MCF 10A (cell line): ENCODE measurements at regions of chr9 and their contacts with region 1.

Region 1: DNA sequence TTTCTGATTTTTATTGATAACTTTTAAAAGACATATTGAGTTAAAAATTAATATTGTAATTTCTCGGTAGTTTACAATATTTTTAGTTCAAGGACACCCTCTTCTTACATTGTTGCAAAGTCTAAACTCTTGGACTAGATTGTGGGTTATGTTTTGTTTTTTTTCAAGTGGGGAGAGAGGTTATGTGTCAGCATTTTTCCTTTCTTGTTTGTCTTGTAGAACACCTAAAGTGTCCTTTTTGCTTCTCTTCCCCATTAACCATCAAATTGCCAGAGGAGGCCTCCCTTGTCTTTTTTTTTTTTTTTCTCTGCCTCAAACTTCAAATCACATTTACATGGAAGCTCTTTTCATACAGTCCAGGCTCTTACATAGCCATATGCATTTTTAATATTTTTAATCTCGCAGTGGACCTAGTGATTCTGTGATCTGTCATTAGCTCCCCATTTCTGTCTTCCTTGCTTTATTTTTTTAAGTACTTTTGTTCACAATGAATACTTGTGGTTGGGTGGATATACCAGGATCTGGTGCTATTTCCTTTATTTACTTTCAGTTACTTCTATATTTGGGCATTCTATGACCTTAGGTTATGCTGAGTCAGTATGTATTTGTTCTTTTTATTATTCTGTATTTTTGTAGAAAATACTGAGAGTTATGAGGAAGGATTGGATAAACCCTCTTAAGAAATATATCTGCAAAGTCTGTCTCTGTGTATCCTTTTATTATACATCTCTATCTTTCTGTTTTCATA is 2280.6 kb upstream of the ACO1 start:
- DNase-seq: no peak
- H3K4me3 Mint-ChIP-seq: no peak overlapping the region
- H3K27ac Mint-ChIP-seq: peak overlapping the region; percentile 26
- H3K4me1 Mint-ChIP-seq: no peaks in the 10 kb centered on the region
- H3K27me3 Mint-ChIP-seq: no peaks in the 10 kb centered on the region
- CTCF ChIP-seq: no peak

Region 2: DNA sequence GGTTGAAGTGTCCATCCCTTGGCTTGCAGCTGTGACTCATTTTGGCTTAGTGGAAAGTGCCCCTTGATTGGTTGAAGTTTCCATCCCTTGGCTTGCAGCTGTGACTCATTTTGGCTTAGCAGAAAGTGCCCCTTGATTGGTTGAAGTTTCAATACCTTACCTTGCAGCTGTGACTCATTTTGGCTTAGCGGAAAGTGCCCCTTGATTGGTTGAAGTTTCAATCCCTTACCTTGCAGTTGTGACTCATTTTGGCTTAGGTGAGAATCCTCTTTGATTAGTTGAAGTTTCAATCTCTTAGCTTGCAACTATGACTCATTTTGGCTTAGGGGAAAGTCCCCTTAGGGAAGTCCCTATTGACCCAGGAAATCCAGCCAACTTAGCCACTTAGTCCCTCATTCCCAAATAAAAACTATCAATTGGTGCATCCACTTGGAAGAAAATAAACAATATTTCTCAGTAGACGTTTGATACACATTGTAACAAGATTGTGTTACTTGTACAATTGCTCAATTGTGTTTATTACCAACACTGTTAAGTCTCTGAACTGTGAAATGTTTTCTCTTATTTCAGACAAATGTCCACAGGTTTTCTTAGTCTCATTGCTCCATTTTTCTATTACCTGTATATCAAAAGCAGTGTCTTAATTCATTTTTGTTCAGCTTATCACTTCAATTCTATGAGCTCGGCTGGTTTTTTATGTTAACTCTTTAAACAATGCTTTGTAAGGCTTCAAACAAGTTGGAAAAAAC is 28.2 kb before region 1 on chr9:
- CTCF ChIA-PET with region 1: no interaction called
- POLR2A ChIA-PET with region 1: no interaction called
- intact Hi-C with region 1: no loop called
- DNase-seq: peak; percentile 60
- H3K4me3 Mint-ChIP-seq: no peak overlapping the region
- H3K27ac Mint-ChIP-seq: no peak overlapping the region
- H3K4me1 Mint-ChIP-seq: no peaks in the 10 kb centered on the region
- H3K27me3 Mint-ChIP-seq: no peaks in the 10 kb centered on the region
- CTCF ChIP-seq: no peak

Region 3: DNA sequence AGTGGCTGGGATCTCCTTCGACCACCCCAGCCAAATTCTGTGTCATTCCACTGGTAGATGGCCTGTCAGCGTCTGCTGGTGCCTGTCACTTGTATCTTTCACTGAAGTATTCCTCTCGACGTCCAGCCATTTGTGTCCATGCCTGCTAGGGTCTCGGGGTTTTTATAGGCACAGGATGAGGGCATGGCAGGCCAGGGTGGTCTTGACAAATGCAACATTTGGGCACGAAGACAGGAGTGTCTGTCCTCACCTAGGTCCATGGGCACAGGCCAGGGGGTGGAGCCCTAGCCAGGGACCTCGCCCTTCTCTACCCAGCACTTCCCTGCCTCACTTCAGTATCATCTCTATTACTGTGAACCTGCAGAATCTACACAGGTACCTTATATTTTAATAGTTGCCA is 56.7 kb after region 1 on chr9:
- CTCF ChIA-PET with region 1: no interaction called
- POLR2A ChIA-PET with region 1: interaction called, 3 read pairs
- intact Hi-C with region 1: loop called (anchors 10 kb)
- DNase-seq: no peak
- H3K4me3 Mint-ChIP-seq: no peak overlapping the region
- H3K27ac Mint-ChIP-seq: no peak overlapping the region
- H3K4me1 Mint-ChIP-seq: no peaks in the 10 kb centered on the region
- H3K27me3 Mint-ChIP-seq: no peaks in the 10 kb centered on the region
- CTCF ChIP-seq: no peak